ENCODE measurements at regions of chr10 and their contacts with region 1.

Region 1: DNA sequence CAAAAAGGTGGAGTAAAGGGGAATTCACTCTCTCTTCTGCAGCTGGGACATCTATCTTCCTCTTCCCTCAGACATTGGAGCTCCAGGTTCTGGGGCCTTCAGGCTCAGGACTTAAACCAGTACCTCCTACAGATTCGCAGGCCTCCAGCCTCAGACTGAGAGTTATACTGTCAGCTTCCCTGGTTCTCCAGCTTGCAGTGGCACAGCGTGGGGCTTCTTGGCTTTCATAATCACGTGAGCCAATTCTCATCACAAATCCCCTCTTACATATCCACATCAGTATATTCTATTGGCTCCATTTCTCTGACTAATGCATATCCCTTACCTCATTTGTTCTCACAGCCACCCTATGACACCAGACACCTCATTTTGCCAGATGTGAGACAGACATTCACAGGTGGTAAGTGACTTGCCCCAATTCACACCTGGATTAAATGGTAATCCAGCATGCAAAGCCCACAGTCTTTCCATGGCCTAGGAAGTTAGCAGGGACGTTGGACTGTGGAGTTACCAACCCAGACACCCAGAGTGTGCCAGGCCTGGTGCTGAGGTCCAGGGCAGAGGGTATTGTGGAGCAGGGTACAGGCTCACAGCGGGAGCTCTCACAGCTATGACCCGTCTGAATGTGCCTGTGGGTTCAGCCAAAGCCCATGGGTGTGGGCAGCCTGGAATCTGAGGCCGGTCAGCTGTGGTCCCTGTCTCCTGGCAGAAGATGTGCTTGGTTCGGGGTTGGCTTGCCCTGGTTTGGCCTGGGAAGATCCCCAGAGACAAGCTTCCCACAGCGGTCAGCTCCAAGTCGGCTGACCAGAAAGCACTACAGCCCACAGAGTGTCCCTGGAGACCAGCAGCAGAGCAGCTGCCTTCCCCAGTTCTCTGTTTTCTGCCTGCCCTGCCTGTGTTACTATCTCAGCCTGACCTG is 18.4 kb upstream of the ZCCHC24 start:
- DNase-seq: no peak
- H3K4me3 Mint-ChIP-seq: no peak overlapping the region
- H3K27ac Mint-ChIP-seq: no peak overlapping the region
- H3K4me1 Mint-ChIP-seq: no peaks in the 10 kb centered on the region
- H3K27me3 Mint-ChIP-seq: no peaks in the 10 kb centered on the region

Region 2: DNA sequence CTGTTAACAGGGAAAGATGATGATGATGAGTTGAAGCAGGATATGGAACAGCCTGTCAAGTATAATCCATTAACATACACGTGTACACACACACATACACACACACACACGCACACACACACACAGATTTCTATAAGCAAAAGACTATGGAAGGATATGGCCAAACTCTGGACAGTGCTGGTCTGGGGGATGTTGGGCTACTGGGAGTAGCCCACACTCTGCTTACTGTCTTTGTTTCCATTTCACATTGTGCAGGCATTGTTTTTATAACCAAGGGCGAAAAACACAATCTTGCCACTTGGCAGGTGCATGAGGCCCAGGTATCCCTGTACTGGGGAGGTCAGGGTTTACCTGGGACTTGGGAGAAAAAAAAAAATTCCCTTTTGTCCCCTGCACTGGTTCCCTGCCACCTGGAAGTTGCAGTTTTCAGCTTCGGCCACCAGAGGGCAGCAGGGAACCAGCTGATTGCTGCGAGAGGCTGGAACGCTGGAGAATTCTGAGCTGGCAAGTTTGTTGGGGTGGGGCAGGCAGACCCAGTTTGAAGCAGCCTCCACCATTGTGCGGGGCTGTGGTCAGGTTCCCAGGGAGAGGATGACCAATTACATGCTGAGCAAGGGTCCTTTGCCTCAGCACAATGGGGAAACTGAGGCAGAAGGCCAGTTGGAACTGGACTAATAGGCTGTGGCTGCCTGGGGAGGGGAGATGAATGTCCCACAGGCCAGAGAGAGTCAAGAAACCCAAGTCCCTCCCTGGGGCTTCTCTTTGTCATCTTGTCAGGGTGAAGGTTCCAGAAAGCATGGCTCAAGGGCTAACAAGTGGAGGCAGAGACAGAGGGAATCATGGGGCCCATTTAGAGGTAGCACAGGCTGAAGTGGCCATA is 89.3 kb before region 1 on chr10:
- intact Hi-C with region 1: loop called (anchors 1 kb)
- DNase-seq: peak; percentile 58
- H3K4me3 Mint-ChIP-seq: no peak overlapping the region
- H3K27ac Mint-ChIP-seq: no peak overlapping the region
- H3K4me1 Mint-ChIP-seq: peaks cover 3% of the 10 kb centered on the region
- H3K27me3 Mint-ChIP-seq: peaks cover 21% of the 10 kb centered on the region

Region 3: GRCh38 chr10:79400146-79401004 is 63.5 kb before region 1 on chr10:
- intact Hi-C with region 1: loop called (anchors 1 kb)
- DNase-seq: peak; percentile 40
- H3K4me3 Mint-ChIP-seq: no peak overlapping the region
- H3K27ac Mint-ChIP-seq: no peak overlapping the region
- H3K4me1 Mint-ChIP-seq: no peaks in the 10 kb centered on the region
- H3K27me3 Mint-ChIP-seq: peaks cover 4% of the 10 kb centered on the region

Measured in activated T-helper 2 cell treated with anti-CD3 and anti-CD28 coated beads, Interferon-gamma antibody, Interleukin-2, Interleukin-4, amounts not matched to agents 10 μg/mL and 5 μg/mL and 100 μg/mL, durations not matched to agents 14 hours and 24 hours and 36 hours (primary cell).